Psoas muscle (tissue), 8 donors: ENCODE measurements at regions of chr13 and their contacts with region 1.

Region 1: DNA sequence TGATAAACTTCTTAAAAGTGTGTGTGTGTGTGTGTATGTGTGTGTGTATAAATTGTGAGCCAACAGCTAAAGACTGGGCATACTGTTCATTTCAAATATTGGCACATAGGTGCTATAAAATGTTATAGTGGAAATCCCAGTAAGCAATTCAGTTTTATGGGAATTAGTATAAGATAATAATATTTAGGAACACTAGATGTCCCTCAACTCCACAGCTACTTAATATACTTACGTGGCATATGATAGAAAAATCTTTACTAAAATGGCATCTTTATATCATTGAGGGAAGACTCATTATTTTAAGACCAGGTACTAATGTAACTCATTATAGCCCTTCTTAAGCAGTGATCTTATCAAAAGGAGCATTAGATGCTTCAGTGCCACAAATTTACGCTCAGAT is 266.2 kb downstream of the MAB21L1 start:
- DNase-seq: no peak
- ATAC-seq: no peak
- H3K4me3 ChIP-seq: no peak overlapping the region
- H3K27ac ChIP-seq: no peak overlapping the region
- H3K4me1 ChIP-seq: no peaks in the 10 kb centered on the region
- H3K27me3 ChIP-seq: no peaks in the 10 kb centered on the region
- CTCF ChIP-seq: no peak

Region 2: DNA sequence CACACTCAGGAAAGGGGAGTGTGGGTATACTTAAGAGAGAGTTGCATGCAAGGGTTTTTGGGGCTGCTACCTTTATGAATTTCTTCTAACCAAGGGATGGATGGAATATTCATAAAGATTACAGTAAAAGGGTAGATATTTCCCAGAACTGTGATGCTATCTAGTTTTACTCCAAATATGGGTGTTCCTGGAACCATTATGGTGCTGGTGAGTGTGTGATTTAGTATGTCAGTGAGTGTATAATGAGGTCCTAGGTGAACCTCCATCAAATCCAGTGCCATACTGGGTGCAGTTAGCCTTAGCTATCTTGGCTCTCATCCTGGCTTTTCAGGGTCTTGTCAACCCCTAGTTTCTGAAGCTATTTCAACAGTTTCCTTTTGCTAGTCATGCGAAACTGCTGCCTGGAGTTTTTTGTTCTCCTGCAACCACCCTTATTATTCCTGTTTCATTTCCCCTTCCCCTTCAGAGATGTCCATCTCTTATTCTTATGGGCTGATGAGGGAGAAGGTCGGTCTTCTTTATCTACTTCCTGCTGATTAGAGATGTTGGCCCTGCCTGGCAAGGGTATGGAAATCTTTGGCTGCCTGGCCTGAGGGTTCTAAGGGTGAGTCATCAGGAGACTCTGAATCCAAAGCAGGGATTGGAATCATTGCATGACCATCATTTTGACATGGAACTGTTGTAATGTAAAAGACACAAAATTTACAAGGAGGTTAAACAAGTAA is 65.9 kb before region 1 on chr13:
- intact Hi-C with region 1: no loop called
- DNase-seq: no peak
- ATAC-seq: no peak
- H3K4me3 ChIP-seq: no peak overlapping the region
- H3K27ac ChIP-seq: no peak overlapping the region
- H3K4me1 ChIP-seq: peaks cover 7% of the 10 kb centered on the region
- H3K27me3 ChIP-seq: no peaks in the 10 kb centered on the region
- CTCF ChIP-seq: no peak

Region 3: DNA sequence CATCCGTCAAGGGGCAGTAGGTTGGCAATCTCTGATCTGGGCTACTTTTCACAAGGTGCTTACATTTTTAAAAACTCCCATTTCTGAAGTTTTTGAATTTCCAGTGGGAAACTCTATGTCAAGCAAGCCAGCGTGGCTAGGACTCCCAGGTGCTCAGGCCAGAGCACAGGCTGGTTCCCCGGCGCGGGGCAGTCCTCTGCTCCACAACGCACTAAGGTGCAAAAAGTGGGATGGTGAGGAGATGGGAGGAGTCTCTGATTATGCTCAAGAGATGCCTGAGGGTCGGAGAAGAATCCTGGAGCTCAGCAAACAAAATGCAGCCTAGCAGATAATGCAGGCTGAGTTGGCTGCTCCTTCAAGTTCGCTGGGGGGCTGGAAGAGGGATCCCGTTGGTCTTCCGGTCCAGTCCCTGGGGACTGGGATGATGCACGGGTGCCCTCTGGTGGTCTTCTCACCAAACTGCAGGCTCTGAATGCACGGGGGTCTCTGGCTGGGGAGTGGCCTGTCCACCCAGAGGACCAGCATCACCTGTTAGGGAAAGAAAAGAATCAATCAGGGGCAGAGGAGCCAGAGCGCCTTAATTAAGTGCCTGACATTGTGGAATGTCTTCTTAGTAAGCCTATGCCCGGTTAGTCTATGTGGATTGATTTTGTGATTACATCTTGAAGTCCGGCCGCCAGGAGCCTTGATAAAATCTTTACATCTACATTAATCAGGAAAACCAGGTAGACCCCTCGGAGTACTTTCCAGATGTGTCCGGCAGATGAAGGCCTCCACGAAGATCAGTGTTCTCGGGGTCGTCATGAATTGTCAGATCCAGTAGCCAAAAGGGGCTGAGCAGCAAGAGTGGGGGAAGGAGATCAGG is 510.7 kb after region 1 on chr13:
- intact Hi-C with region 1: loop called in 1 of 2 experiments (anchors 10 kb)
- DNase-seq: peak; percentile 39 to 64
- ATAC-seq: peak; percentile 33 to 67 (median 60)
- H3K4me3 ChIP-seq: peak overlapping the region; percentile 34
- H3K27ac ChIP-seq: no peak overlapping the region
- H3K4me1 ChIP-seq: peaks cover 9% of the 10 kb centered on the region
- H3K27me3 ChIP-seq: no peaks in the 10 kb centered on the region
- CTCF ChIP-seq: peak; percentile 93

Region 4: DNA sequence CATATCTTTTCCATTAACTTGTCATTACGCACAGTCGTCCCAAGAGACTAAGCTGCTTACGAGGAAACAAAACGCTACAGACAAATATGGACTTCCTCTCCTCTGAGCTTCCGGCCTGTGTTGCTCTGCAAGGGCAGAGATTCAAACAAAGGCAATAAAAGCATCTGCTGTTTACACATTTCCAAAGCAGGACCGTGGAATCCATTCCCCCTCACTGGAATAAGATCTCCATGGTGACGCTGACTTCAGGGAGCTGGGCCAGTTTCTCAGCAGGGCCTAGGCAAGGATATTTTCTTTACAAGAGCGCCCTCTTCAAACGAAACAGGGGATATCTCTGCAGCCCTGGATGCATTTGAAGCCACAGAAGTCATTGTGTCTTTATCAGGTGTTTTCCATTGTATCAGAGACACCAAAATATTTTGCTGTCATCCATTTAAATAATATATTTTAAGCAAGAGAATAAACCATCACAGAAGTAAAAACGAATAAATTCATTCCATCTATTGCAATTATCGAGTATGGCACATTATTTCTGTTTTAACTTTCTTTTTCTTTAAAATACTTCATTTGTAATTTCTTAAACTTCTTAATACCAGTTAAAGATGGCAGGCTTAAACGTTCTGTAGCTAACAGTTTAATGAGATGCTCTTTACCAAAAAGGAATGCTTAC is 743.4 kb after region 1 on chr13:
- intact Hi-C with region 1: loop called in 1 of 2 experiments (anchors 10 kb)
- DNase-seq: peak; percentile 76 to 88
- ATAC-seq: peak; percentile 78 to 90 (median 86)
- H3K4me3 ChIP-seq: peak overlapping the region; percentile 26
- H3K27ac ChIP-seq: no peak overlapping the region
- H3K4me1 ChIP-seq: peaks cover 12% of the 10 kb centered on the region
- H3K27me3 ChIP-seq: no peaks in the 10 kb centered on the region
- CTCF ChIP-seq: peak; percentile 49